AG04450 (cell line): ENCODE measurements at regions of chr13 and their contacts with region 1.

Region 1: DNA sequence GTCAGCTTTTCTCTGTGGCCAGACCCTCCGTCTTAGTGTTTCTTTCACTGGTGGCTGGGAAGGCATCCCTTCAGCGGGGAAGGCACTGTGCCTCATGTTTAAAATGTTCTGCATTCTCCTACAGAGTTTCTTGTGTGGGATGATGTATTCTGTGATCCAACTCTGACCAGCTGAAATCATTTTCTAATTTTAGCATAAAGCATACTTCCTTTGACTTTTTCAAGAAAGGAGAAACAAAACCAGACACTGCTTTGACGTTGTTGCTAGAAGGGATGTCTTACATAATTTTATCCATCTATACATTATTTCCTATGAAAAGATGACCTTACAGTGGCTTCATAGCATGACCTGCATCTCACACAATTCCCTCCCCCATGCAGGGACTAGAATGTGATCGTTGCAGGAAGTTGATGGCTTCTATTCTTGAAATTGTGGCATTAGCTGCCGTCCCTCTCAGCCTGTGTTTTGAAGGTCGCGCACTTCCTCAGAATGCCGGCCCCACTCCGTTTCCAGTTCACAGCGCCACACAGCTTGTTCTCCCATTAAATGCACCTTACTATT is 38.6 kb upstream of the TEX29 start:
- DNase-seq: peak; percentile 61
- H3K4me3 ChIP-seq: peak overlapping the region; percentile 8
- H3K27ac ChIP-seq: peak overlapping the region; percentile 98
- H3K27me3 ChIP-seq: no peaks in the 10 kb centered on the region
- CTCF ChIP-seq: no peak

Region 2: GRCh38 chr13:110799246-110800236 is 482.3 kb before region 1 on chr13:
- CTCF ChIA-PET with region 1: no interaction called
- POLR2A ChIA-PET with region 1: interaction called, 13 read pairs
- DNase-seq: peak; percentile 86
- H3K4me3 ChIP-seq: peak overlapping the region; percentile 50
- H3K27ac ChIP-seq: peak overlapping the region; percentile 96
- H3K27me3 ChIP-seq: no peaks in the 10 kb centered on the region
- CTCF ChIP-seq: no peak

Region 3: GRCh38 chr13:111265006-111265700 is 16.7 kb before region 1 on chr13:
- CTCF ChIA-PET with region 1: no interaction called
- POLR2A ChIA-PET with region 1: interaction called, 10 read pairs
- DNase-seq: no peak
- H3K4me3 ChIP-seq: no peak overlapping the region
- H3K27ac ChIP-seq: no peak overlapping the region
- H3K27me3 ChIP-seq: no peaks in the 10 kb centered on the region
- CTCF ChIP-seq: no peak

Region 4: DNA sequence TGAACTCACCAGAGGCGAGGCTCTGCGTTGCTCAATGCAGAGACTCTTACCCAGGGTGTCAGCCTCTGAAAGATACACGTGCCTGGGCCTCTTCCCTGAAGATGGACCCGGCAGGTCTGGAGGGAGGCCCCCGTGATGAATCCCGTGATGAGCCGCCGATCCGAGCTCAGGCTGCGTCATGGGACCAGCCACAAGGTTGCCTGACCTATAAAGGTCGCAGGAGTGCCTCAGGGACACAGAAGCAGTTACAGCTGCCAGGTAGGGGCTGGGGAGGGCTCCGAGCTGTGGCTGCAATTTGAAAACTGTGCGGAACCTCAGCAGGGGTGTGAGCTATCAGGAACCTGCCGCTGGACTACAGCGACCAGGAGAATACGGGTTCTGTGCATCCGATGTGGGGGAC is 1397.5 kb after region 1 on chr13:
- CTCF ChIA-PET with region 1: interaction called, 10 read pairs
- POLR2A ChIA-PET with region 1: no interaction called
- DNase-seq: no peak
- H3K4me3 ChIP-seq: no peak overlapping the region
- H3K27ac ChIP-seq: no peak overlapping the region
- H3K27me3 ChIP-seq: peaks cover 25% of the 10 kb centered on the region
- CTCF ChIP-seq: no peak